A549 (cell line): ENCODE measurements at regions of chr14 and their contacts with region 1.

Region 1: DNA sequence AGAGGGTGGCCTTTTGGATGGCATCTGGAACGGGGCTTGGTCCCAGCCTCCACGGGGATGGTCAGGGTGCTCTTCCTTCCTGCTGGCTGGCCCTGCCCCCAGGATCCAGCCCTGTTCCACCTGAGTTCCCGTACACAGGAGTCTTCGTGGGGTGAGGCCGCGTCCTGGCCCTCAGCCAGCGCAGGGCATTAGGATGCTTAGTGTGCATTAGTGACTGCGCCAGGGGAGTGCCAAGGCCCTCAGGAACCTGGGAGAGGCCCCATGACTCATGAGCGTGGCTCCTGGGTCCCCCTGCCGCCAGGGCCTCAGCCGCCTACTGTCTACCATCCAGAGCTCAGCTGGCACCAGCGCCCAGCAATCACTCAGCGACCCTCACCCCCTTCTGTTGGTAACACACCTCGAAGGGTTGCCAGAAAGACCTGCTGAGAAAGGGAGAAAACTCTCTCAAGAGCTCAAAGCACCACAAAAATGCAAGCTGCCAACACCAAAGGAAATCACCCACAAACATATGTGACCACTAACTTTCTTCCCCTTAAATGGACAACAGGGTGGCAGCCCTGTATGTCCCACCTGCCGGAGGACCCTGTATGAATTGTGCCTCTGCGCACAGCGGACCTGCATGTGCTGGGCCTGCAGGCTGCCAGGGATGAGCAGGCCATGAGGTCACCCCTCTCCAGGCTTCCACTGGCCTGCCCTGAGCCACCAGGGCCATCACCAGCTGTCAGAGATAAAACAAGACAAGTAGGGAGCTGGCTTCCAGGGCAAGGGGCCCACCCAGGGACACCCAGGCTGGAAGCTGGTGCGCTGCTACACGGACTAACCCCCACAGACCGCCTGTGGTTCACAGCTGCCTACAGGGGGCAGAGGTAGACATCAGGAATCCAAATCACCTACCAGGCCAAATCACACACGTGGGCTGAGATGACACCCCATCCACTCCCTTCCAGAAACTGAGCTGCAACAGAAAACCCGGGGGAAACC is 28.7 kb downstream of the CCDC85C start:
- DNase-seq: peak; percentile 58 to 81
- ATAC-seq: peak; percentile 51 to 65
- H3K4me3 ChIP-seq: peak overlapping the region; percentile 21
- H3K27ac ChIP-seq: peak overlapping the region; percentile 78 to 92
- H3K4me1 ChIP-seq: peaks cover 100% of the 10 kb centered on the region
- CTCF ChIP-seq: peak; percentile 39; the same call in 2 of the 3 replicates
- EP300 ChIP-seq: peak in 1 of 2 experiments; percentile 45; a peak in 1 of 5 replicates
- POLR2A ChIP-seq: no peak
- RAD21 ChIP-seq: peak in 1 of 2 experiments; percentile 37; a peak in 1 of 5 replicates

Region 2: DNA sequence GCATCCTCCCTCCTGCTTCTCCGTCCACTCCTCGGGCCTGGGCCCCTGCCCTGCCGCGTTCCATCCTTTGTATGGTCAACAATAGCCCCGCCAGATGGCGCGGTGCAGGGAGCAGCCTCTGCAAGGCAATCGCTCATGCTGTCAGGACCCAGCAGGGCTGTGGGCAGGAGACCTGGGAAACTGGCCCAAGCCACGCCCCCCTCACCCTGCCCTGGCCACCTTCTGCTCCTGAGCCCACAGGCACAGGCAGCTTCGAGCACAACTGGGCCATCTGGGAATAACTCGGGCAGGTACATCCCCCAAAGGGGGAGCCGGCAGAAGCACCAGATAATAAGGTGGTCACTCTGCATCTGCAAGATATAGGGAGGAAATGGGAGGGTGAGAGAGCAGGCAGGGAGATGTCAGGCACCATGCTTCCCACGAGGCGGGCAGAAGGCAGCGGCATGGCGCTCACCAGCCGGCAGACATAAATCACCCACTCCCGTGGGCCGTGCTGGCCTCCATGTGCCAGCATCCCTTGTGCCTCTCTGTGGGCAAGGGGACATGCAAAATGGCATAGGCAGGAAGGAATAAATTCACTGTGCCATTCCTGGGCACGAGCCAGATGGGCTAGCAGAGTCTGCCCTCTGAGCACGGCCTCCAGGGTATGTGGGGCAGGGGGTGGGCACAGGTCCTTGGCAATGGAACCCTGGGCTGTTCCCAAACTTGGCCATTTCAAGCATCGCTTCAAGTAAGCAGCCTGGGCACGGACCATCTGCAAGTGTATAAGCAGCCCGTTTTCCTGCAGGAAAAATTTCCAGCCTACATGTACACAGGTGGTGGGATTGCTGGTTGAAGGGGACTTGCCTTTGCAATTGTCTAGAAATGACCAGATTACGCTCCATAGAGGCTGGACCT is 11.9 kb before region 1 on chr14:
- CTCF ChIA-PET with region 1: interaction called, 51 read pairs
- POLR2A ChIA-PET with region 1: no interaction called
- DNase-seq: peak; percentile 76 to 86
- ATAC-seq: peak; percentile 93 to 98
- H3K4me3 ChIP-seq: no peak overlapping the region
- H3K27ac ChIP-seq: peak overlapping the region; percentile 37 to 92; a peak in 4 of 6 replicates
- H3K4me1 ChIP-seq: peaks cover 72% of the 10 kb centered on the region
- CTCF ChIP-seq: peak; percentile 67
- EP300 ChIP-seq: no peak
- POLR2A ChIP-seq: no peak
- RAD21 ChIP-seq: peak; percentile 74 to 81

Region 3: GRCh38 chr14:99595034-99595433 is 19.7 kb after region 1 on chr14:
- CTCF ChIA-PET with region 1: interaction called, 31 read pairs
- POLR2A ChIA-PET with region 1: no interaction called
- DNase-seq: no peak
- ATAC-seq: no peak
- H3K4me3 ChIP-seq: no peak overlapping the region
- H3K27ac ChIP-seq: no peak overlapping the region
- H3K4me1 ChIP-seq: peaks cover 70% of the 10 kb centered on the region
- CTCF ChIP-seq: no peak
- EP300 ChIP-seq: no peak
- POLR2A ChIP-seq: no peak
- RAD21 ChIP-seq: no peak

Region 4: DNA sequence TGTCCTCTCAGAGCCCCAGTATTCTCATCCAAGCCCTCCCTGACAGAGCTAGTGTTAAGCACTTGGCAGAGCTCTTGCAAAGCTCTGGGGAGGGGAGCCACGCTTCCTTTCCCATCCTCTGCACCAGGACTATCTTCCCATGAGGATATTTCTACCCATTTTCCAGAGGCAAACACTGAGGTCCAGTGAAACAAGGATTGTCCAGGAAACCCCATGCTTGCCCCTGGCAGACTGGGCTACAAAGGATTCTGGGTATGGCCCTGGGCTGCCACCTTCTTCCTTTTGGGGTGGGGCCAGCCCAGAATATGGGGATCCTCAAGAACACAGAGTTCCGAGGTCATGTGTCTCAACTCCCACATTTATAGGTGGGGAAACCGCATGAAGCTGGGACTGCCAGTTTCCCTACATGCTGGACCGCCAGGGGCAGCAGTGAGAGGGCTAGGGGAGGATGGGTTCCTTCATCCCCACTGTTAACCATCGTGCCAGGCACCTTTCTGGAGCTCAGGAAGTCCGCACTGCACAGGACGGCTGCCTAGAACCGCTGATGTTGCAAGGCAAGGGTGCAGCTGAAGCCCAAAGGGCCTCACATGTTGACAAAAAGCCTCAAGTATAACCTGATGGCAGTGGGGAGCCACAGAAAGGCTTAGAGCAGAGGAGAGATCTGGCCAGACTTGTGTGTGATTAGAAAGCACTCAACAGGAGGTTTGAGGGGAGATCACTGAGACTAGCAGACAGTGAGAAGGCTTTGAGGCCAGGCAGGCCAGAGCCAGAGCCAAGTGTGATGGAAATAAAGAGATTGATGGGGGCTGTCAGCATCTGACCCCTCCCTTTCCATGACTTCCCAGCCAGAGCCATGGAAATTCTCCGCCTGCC is 34.1 kb after region 1 on chr14:
- CTCF ChIA-PET with region 1: interaction called, 34 read pairs
- POLR2A ChIA-PET with region 1: interaction called, 25 read pairs
- DNase-seq: peak; percentile 62 to 68
- ATAC-seq: peak; percentile 50 to 64; a peak in 5 of 6 replicates
- H3K4me3 ChIP-seq: no peak overlapping the region
- H3K27ac ChIP-seq: peak overlapping the region in 1 of 2 experiments; percentile 64; a peak in 4 of 6 replicates
- H3K4me1 ChIP-seq: peaks cover 11% of the 10 kb centered on the region; the same call in 2 of the 3 replicates
- CTCF ChIP-seq: peak; percentile 53
- EP300 ChIP-seq: no peak
- POLR2A ChIP-seq: no peak
- RAD21 ChIP-seq: peak in 1 of 2 experiments; percentile 44; a peak in 2 of 5 replicates

Region 5: DNA sequence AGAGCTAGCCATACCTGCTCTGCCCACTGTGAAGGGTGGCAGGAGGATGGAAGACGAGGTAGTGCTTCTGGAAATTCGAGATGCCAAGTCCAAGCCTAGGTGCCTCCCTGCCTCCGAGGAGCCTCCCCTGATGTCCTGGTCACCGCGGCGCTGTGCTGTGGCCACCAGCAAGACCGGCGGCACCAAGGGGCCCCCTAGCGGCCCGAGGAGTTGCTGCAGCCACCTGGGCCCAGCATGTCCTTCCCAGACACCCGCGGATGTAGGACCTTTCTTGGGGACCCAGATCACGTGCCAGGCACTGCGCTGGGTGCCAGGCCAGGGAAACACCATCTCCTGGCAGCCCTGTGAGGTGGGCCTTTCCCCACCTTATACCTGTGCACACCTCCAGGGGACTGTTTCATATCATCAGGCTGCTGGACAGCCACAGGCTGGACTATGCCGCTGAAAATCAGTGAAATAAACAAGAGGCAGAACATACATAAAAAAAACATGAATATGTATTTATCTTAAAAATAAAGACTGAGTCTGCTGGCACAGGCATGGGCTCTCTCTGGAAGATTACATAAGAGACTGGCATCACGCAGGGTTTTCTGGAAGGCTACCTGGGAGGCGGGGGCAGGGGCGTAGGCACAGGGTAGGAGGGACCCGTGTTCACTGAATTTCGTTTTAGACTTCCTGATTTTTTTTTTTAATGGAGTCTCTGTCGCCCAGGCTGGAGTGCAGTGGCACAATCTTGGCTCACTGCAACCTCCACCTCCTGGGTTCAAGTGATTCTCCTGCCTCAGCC is 53.7 kb after region 1 on chr14:
- CTCF ChIA-PET with region 1: interaction called, 12 read pairs
- POLR2A ChIA-PET with region 1: interaction called, 3 read pairs
- DNase-seq: peak; percentile 80 to 89
- ATAC-seq: peak; percentile 91 to 97
- H3K4me3 ChIP-seq: no peak overlapping the region
- H3K27ac ChIP-seq: peak overlapping the region in 1 of 2 experiments; percentile 64; a peak in 2 of 6 replicates
- H3K4me1 ChIP-seq: 0 out of 3 replicates have a peak, but pooled peaks cover 3% of the 10 kb centered on the region
- CTCF ChIP-seq: peak; percentile 96
- EP300 ChIP-seq: no peak
- POLR2A ChIP-seq: no peak
- RAD21 ChIP-seq: peak; percentile 96 to 98